A549 (cell line): ENCODE measurements at regions of chr2 and their contacts with region 1.

Region 1: GRCh38 chr2:27765621-27766269 is 5.8 kb upstream of the MRPL33 start:
- DNase-seq: peak in 1 of 2 experiments; percentile 37
- ATAC-seq: peak; percentile 55 to 57; a peak in 5 of 6 replicates
- H3K4me3 ChIP-seq: no peak overlapping the region
- H3K27ac ChIP-seq: peak overlapping the region; percentile 62 to 69
- H3K4me1 ChIP-seq: peaks cover 27% of the 10 kb centered on the region
- CTCF ChIP-seq: no peak
- EP300 ChIP-seq: no peak
- POLR2A ChIP-seq: no peak
- RAD21 ChIP-seq: no peak

Region 2: DNA sequence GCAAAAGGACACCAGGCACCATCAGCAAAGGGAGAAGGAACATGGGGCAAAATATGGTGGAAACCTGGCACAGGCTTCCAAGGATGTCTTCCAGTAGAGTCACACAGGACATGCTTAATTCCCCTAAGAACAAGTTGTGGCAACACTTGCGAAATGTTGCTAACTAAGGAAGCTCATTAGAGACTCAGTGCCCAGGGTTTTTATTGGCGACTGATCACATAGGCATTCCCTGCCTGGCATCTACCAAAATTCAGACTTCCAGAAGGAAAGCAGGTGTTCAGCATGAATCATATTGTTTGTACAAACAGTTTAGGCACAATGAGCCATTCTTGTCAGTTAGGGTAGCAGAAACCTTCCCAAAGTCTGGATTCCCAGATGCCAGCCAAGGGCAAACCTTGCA is 76.3 kb before region 1 on chr2:
- CTCF ChIA-PET with region 1: no interaction called
- POLR2A ChIA-PET with region 1: no interaction called
- DNase-seq: no peak
- ATAC-seq: no peak
- H3K4me3 ChIP-seq: no peak overlapping the region
- H3K27ac ChIP-seq: no peak overlapping the region
- H3K4me1 ChIP-seq: peaks cover 6% of the 10 kb centered on the region; the same call in 2 of the 3 replicates
- CTCF ChIP-seq: no peak
- EP300 ChIP-seq: no peak
- POLR2A ChIP-seq: no peak
- RAD21 ChIP-seq: no peak

Region 3: DNA sequence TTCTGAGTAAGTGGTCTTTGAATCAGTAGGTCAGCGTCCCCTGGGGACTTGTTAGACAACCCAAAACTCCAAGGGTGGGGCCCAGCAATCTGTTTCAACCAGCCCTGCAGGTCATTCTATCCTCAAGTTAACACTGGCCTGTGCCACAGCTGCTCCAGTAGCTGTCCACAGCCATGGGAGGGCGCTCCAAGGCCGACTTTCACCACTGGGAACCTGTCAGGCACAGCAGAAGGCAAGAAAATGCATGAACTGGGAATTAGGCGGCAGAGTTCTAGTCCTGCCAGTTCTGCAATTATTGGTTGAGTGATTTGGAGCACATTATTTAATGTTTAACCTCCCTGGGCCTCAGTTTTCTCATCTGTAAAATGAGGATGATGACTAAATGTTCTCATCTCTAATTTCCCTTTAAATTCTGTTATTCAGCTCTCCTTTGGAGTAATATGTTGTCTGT is 11.6 kb before region 1 on chr2:
- CTCF ChIA-PET with region 1: interaction called, 10 read pairs
- POLR2A ChIA-PET with region 1: no interaction called
- DNase-seq: peak; percentile 53 to 85
- ATAC-seq: peak; percentile 97 to 99
- H3K4me3 ChIP-seq: no peak overlapping the region
- H3K27ac ChIP-seq: peak overlapping the region; percentile 74 to 82
- H3K4me1 ChIP-seq: peaks cover 26% of the 10 kb centered on the region
- CTCF ChIP-seq: peak; percentile 96
- EP300 ChIP-seq: no peak
- POLR2A ChIP-seq: no peak
- RAD21 ChIP-seq: peak; percentile 98 to 100